IMR-90 (cell line): ENCODE measurements at regions of chr12 and their contacts with region 1.

Region 1: GRCh38 chr12:69359531-69360347 is at the start of gene YEATS4:
- DNase-seq: peak; percentile 88
- ATAC-seq: peak; percentile 96
- H3K4me3 ChIP-seq: peak within 1 kb of the TSS; percentile 73
- H3K27ac ChIP-seq: peak within 1 kb of the TSS; percentile 55
- H3K4me1 ChIP-seq: no peaks in the 10 kb centered on the region
- H3K27me3 ChIP-seq: 0 out of 2 replicates have a peak, but pooled peaks cover 2% of the 10 kb centered on the region
- CTCF ChIP-seq: no peak
- POLR2A ChIP-seq: peak; percentile 70; the same call in 1 of the 2 replicates
- RAD21 ChIP-seq: no peak
- total RNA-seq, gene YEATS4: 15.1 and 17.8 TPM in 2 replicates

Region 2: DNA sequence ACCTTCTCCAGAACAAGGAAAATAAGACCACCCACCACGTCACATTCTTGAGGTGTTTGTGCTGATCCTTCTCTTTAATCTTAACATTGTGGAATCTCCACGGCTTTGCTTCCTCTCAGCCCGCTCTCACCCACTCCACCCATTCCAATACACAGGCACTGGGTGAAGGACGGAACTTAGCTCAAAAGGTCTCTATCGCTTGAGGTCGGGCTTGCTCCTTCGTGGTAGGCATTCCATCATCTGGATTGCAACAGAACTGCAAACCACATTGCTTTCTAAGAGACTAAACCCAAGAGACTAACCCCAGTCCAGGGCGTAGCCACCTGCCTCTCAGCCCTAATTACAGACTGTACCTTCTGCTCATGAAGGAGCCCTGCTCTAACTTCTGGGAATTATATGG is 575.7 kb before region 1 on chr12:
- CTCF ChIA-PET with region 1: no interaction called
- POLR2A ChIA-PET with region 1: no interaction called
- dilution Hi-C with region 1: no loop called
- in situ Hi-C with region 1: no loop called
- intact Hi-C with region 1: no loop called
- DNase-seq: no peak
- ATAC-seq: no peak
- H3K4me3 ChIP-seq: no peak overlapping the region
- H3K27ac ChIP-seq: no peak overlapping the region
- H3K4me1 ChIP-seq: peaks cover 6% of the 10 kb centered on the region
- H3K27me3 ChIP-seq: no peaks in the 10 kb centered on the region
- CTCF ChIP-seq: no peak
- POLR2A ChIP-seq: no peak
- RAD21 ChIP-seq: no peak

Region 3: DNA sequence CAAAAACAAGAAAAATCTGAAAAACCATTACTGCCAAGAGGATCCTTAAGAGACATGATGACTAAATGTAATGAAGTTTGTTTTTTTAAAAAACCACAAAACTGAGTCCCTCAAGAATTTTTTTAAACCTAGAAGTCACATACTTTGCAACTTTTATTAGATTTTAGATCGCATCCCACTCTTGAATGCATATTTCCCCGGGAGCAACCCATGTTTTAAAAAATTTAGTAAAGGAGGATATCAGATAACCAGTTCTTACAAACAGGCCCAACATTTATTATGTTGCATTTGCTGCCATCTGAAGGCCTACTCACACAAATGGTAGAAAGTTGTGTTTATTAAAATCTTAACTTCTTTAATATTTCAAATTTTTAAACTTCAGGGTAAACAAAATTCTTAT is 181.2 kb after region 1 on chr12:
- CTCF ChIA-PET with region 1: interaction called, 3 read pairs
- POLR2A ChIA-PET with region 1: no interaction called
- dilution Hi-C with region 1: no loop called
- in situ Hi-C with region 1: no loop called
- intact Hi-C with region 1: loop called (anchors 1 kb)
- DNase-seq: peak; percentile 84
- ATAC-seq: peak; percentile 95
- H3K4me3 ChIP-seq: no peak overlapping the region
- H3K27ac ChIP-seq: no peak overlapping the region
- H3K4me1 ChIP-seq: peaks cover 7% of the 10 kb centered on the region
- H3K27me3 ChIP-seq: no peaks in the 10 kb centered on the region
- CTCF ChIP-seq: peak; percentile 39
- POLR2A ChIP-seq: no peak
- RAD21 ChIP-seq: peak; percentile 46

Region 4: GRCh38 chr12:69585189-69586062 is 225.7 kb after region 1 on chr12 and contains the start of gene CCT2:
- CTCF ChIA-PET with region 1: no interaction called
- POLR2A ChIA-PET with region 1: no interaction called
- dilution Hi-C with region 1: no loop called
- in situ Hi-C with region 1: no loop called
- intact Hi-C with region 1: loop called (anchors 1 kb)
- DNase-seq: peak; percentile 94
- ATAC-seq: peak; percentile 97
- H3K4me3 ChIP-seq: peak within 1 kb of the TSS; percentile 52
- H3K27ac ChIP-seq: peak within 1 kb of the TSS; percentile 60
- H3K4me1 ChIP-seq: no peaks in the 10 kb centered on the region
- H3K27me3 ChIP-seq: no peaks in the 10 kb centered on the region
- CTCF ChIP-seq: peak; percentile 45
- POLR2A ChIP-seq: peak; percentile 96
- RAD21 ChIP-seq: peak; percentile 44
- total RNA-seq, gene CCT2: 565 and 651 TPM in 2 replicates

Region 5: GRCh38 chr12:69738351-69739286 is 378.9 kb after region 1 on chr12 and contains the start of gene RAB3IP:
- CTCF ChIA-PET with region 1: no interaction called
- POLR2A ChIA-PET with region 1: no interaction called
- dilution Hi-C with region 1: no loop called
- in situ Hi-C with region 1: no loop called
- intact Hi-C with region 1: loop called (anchors 10 kb)
- DNase-seq: peak; percentile 61
- ATAC-seq: peak; percentile 95
- H3K4me3 ChIP-seq: peak within 1 kb of the TSS; percentile 74
- H3K27ac ChIP-seq: no peak within 1 kb of the TSS; the same call in 1 of the 2 replicates
- H3K4me1 ChIP-seq: no peaks in the 10 kb centered on the region
- H3K27me3 ChIP-seq: peaks cover 17% of the 10 kb centered on the region
- CTCF ChIP-seq: peak; percentile 57
- POLR2A ChIP-seq: no peak
- RAD21 ChIP-seq: peak; percentile 11; the same call in 1 of the 2 replicates
- total RNA-seq, gene RAB3IP: 2.7 and 3.3 TPM in 2 replicates